ENCODE measurements at regions of chr7 and their contacts with region 1.

Region 1: DNA sequence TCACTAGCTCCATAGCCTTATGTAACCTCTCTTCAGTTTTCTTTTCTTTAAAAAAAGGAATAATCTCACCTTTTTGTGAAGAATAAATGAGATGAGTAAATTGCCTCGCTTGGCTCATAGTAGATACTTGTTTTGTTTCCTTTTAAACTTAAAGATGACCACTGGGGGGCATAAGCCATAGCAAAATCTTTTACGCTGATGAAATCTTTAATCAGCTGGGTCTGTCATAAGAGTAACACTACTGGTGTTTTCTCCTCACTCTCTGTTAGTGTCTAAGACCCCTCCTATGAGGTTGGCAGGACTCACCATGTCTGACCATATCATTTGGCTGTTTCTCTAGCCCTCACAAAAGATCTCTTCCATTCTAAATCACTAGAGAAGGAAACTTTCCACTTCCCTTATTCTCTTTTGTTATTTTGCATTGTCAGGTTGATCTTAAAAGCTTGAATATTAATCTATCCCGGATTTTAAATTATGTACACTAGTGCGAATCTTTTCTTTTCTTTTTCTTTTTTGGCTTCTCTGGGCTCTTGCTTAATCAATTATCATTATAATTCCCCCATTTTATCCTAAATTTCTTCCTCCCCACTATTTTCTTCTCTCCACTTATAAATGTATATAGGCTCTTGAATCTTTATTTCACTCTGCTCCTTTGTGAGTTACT is 12.5 kb downstream of the STAG3 start:
- DNase-seq: peak; percentile 74
- ATAC-seq: peak; percentile 50
- H3K4me3 ChIP-seq: no peak overlapping the region
- H3K4me3 Mint-ChIP-seq: peak overlapping the region; percentile 49
- H3K27ac ChIP-seq: peak overlapping the region; percentile 81 to 83
- H3K27ac Mint-ChIP-seq: peak overlapping the region; percentile 93
- H3K4me1 ChIP-seq: peaks cover 52 to 57% of the 10 kb centered on the region in 2 donors
- H3K4me1 Mint-ChIP-seq: peaks cover 54% of the 10 kb centered on the region
- H3K27me3 ChIP-seq: no peaks in the 10 kb centered on the region
- H3K27me3 Mint-ChIP-seq: no peaks in the 10 kb centered on the region
- CTCF ChIP-seq: peak; percentile 74

Region 2: GRCh38 chr7:100158229-100159098 is 31.7 kb before region 1 on chr7 and contains the start of gene TRAPPC14:
- CTCF ChIA-PET with region 1: interaction called, 4 read pairs
- POLR2A ChIA-PET with region 1: interaction called, 5 read pairs
- intact Hi-C with region 1: loop called (anchors 5 kb)
- DNase-seq: peak; percentile 93
- ATAC-seq: peak; percentile 93
- H3K4me3 ChIP-seq: peak within 1 kb of the TSS; percentile 56 to 95 (median 73)
- H3K4me3 Mint-ChIP-seq: peak within 1 kb of the TSS; percentile 89
- H3K27ac ChIP-seq: peak within 1 kb of the TSS; percentile 68 to 84
- H3K27ac Mint-ChIP-seq: peak within 1 kb of the TSS; percentile 90
- H3K4me1 ChIP-seq: peaks cover 22 to 27% of the 10 kb centered on the region in 2 donors
- H3K4me1 Mint-ChIP-seq: peaks cover 43% of the 10 kb centered on the region
- H3K27me3 ChIP-seq: no peaks in the 10 kb centered on the region
- H3K27me3 Mint-ChIP-seq: no peaks in the 10 kb centered on the region
- CTCF ChIP-seq: no peak
- total RNA-seq, gene TRAPPC14: 71.2 and 75.8 TPM in 2 replicates

Region 3: GRCh38 chr7:100200693-100201092 is 10.5 kb after region 1 on chr7:
- CTCF ChIA-PET with region 1: interaction called, 56 read pairs
- POLR2A ChIA-PET with region 1: interaction called, 6 read pairs
- intact Hi-C with region 1: no loop called
- DNase-seq: no peak
- ATAC-seq: no peak
- H3K4me3 ChIP-seq: no peak overlapping the region
- H3K4me3 Mint-ChIP-seq: peak overlapping the region; percentile 83
- H3K27ac ChIP-seq: peak overlapping the region in 1 of 2 donors; percentile 56
- H3K27ac Mint-ChIP-seq: peak overlapping the region; percentile 89
- H3K4me1 ChIP-seq: peaks cover 23 to 35% of the 10 kb centered on the region in 2 donors
- H3K4me1 Mint-ChIP-seq: peaks cover 60% of the 10 kb centered on the region
- H3K27me3 ChIP-seq: no peaks in the 10 kb centered on the region
- H3K27me3 Mint-ChIP-seq: no peaks in the 10 kb centered on the region
- CTCF ChIP-seq: no peak

Region 4: DNA sequence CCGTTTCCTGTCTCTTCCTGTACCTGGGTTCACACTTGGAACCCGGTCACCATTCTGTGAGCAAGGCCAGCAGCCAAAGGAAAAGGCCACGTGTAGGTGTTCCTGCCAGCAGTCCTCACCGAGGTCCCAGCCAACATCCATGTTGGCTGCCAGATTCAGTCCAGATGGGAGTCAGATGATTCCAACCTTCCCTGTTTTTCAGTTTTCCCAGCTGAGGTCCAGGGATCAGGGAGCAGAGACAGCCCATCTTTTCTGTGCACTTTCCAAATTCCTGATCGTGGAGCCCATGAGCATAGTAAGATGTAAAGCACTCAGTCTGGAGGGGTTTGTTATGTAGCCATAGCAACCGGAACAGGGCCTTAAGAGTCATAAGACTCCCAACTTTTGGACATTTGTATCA is 25.7 kb after region 1 on chr7:
- CTCF ChIA-PET with region 1: interaction called, 93 read pairs
- POLR2A ChIA-PET with region 1: interaction called, 13 read pairs
- intact Hi-C with region 1: loop called (anchors 1 kb)
- DNase-seq: no peak
- ATAC-seq: no peak
- H3K4me3 ChIP-seq: no peak overlapping the region
- H3K4me3 Mint-ChIP-seq: peak overlapping the region; percentile 3
- H3K27ac ChIP-seq: peak overlapping the region; percentile 71 to 95
- H3K27ac Mint-ChIP-seq: peak overlapping the region; percentile 89
- H3K4me1 ChIP-seq: peaks cover 63 to 74% of the 10 kb centered on the region in 2 donors
- H3K4me1 Mint-ChIP-seq: peaks cover 81% of the 10 kb centered on the region
- H3K27me3 ChIP-seq: no peaks in the 10 kb centered on the region
- H3K27me3 Mint-ChIP-seq: no peaks in the 10 kb centered on the region
- CTCF ChIP-seq: no peak

Region 5: DNA sequence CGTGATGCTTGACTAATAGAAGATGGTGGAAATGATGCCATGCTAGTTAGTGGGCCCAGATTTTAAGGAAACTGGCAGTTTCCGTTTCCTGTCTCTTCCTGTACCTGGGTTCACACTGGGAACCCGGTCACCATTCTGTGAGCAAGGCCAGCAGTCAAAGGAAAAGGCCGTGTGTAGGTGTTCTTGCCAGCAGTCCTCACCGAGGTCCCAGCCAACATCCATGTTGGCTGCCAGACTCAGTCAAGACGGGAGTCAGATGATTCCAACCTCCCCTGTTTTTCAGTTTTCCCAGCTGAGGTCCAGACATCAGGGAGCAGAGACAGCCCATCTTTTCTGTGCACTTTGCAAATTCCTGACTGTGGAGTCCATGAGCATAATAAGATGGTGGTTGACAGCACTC is 152.6 kb after region 1 on chr7:
- CTCF ChIA-PET with region 1: interaction called, 12 read pairs
- POLR2A ChIA-PET with region 1: interaction called, 3 read pairs
- intact Hi-C with region 1: no loop called
- DNase-seq: peak; percentile 9
- ATAC-seq: no peak
- H3K4me3 ChIP-seq: no peak overlapping the region
- H3K4me3 Mint-ChIP-seq: peak overlapping the region; percentile 41
- H3K27ac ChIP-seq: peak overlapping the region in 1 of 2 donors; percentile 63
- H3K27ac Mint-ChIP-seq: peak overlapping the region; percentile 87
- H3K4me1 ChIP-seq: peaks cover 18 to 29% of the 10 kb centered on the region in 2 donors
- H3K4me1 Mint-ChIP-seq: peaks cover 45% of the 10 kb centered on the region
- H3K27me3 ChIP-seq: no peaks in the 10 kb centered on the region
- H3K27me3 Mint-ChIP-seq: no peaks in the 10 kb centered on the region
- CTCF ChIP-seq: no peak

Region 6: DNA sequence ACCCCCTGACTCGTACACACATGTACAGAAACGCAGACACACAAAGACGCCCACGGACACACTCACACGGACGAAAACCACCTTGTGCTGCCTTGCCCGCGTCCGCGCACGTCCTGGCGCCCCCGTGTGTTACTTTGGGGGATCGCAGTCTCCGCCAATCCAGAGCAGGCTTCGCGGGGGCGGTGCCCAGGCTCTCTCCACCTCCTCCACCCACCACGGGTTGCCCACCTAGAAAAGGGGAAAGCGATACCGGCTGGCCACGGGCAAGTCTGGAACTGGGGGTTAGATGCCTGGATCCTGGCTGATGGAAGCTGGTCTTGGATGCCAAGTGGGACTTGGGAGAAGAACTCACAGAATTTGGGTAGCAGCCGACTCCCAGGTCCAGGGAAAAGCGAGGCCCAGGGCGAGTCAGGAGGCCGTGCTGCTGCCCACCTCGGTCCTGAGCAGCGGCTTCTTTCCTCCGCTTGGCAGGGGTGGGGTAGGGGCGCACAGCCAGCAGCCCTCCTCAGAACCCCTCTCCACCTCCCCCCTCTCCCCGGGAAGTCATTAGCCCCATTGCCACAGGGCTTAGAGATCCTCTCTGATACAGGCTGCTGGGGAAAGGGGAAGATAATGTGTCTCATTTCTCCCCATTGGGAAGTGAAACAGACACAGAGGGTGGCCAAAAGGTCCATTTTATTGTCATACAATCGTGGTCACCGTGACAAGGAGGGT is 979.8 kb after region 1 on chr7:
- CTCF ChIA-PET with region 1: no interaction called
- POLR2A ChIA-PET with region 1: no interaction called
- intact Hi-C with region 1: no loop called
- DNase-seq: peak; percentile 83
- ATAC-seq: peak; percentile 57
- H3K4me3 ChIP-seq: no peak overlapping the region
- H3K4me3 Mint-ChIP-seq: peak overlapping the region; percentile 49
- H3K27ac ChIP-seq: no peak overlapping the region
- H3K27ac Mint-ChIP-seq: peak overlapping the region; percentile 60
- H3K4me1 ChIP-seq: peaks cover 74 to 84% of the 10 kb centered on the region in 2 donors
- H3K4me1 Mint-ChIP-seq: peaks cover 62% of the 10 kb centered on the region
- H3K27me3 ChIP-seq: peaks cover 0 to 99% (median 75%) of the 10 kb centered on the region in 4 experiments
- H3K27me3 Mint-ChIP-seq: peaks cover 80% of the 10 kb centered on the region
- CTCF ChIP-seq: peak; percentile 90

Measured in B cell (primary cell).